Naive thymus-derived CD4-positive, alpha-beta T cell (primary cell): ENCODE measurements at regions of chr16 and their contacts with region 1.

Region 1: DNA sequence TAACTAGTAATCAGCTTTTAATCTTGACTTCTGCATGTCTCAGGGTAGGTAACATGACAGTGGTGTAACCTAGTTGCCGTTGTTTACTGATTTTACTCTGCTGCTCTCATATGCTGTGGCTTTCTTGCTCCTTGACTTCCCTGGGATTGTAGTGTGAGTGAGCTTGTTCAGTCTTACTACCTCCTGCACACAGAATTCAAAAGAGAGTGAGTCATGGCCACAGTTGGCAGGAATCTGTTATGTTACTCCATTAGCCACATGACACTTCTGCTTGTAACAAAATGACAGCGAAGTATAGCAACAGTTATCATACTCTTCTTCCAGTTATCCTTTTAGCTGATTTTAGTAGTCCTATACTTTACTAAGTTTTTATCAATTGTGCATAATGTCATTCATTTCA is 18.8 kb downstream of the TNRC6A start:
- DNase-seq: no peak
- ATAC-seq: peak; percentile 59
- H3K4me3 ChIP-seq: no peak overlapping the region
- H3K4me3 Mint-ChIP-seq: peak overlapping the region in 6 of 10 donors; percentile 10 to 54 (median 34)
- H3K27ac ChIP-seq: no peak overlapping the region
- H3K27ac Mint-ChIP-seq: peak overlapping the region in 5 of 9 donors; percentile 13 to 82 (median 55)
- H3K4me1 ChIP-seq: peaks cover 12 to 51% of the 10 kb centered on the region in 2 donors
- H3K4me1 Mint-ChIP-seq: peaks cover 64 to 97% (median 88%) of the 10 kb centered on the region in 7 donors
- H3K27me3 ChIP-seq: no peaks in the 10 kb centered on the region
- H3K27me3 Mint-ChIP-seq: no peaks in the 10 kb centered on the region

Region 2: GRCh38 chr16:23578101-23578830 is 1170.0 kb before region 1 on chr16:
- CTCF ChIA-PET with region 1: no interaction called
- POLR2A ChIA-PET with region 1: interaction called, 11 read pairs
- intact Hi-C with region 1: no loop called
- DNase-seq: no peak
- ATAC-seq: no peak
- H3K4me3 ChIP-seq: no peak overlapping the region
- H3K4me3 Mint-ChIP-seq: no peak overlapping the region
- H3K27ac ChIP-seq: no peak overlapping the region
- H3K27ac Mint-ChIP-seq: peak overlapping the region in 2 of 9 donors; percentile 12 to 25
- H3K4me1 ChIP-seq: no peaks in the 10 kb centered on the region
- H3K4me1 Mint-ChIP-seq: peaks cover 0 to 3% (median 0%) of the 10 kb centered on the region in 7 donors
- H3K27me3 ChIP-seq: no peaks in the 10 kb centered on the region
- H3K27me3 Mint-ChIP-seq: no peaks in the 10 kb centered on the region

Region 3: GRCh38 chr16:24689145-24689544 is 59.1 kb before region 1 on chr16:
- CTCF ChIA-PET with region 1: no interaction called
- POLR2A ChIA-PET with region 1: no interaction called
- intact Hi-C with region 1: no loop called
- DNase-seq: no peak
- ATAC-seq: no peak
- H3K4me3 ChIP-seq: no peak overlapping the region
- H3K4me3 Mint-ChIP-seq: no peak overlapping the region
- H3K27ac ChIP-seq: no peak overlapping the region
- H3K27ac Mint-ChIP-seq: no peak overlapping the region
- H3K4me1 ChIP-seq: no peaks in the 10 kb centered on the region
- H3K4me1 Mint-ChIP-seq: peaks cover 0 to 8% (median 0%) of the 10 kb centered on the region in 7 donors
- H3K27me3 ChIP-seq: no peaks in the 10 kb centered on the region
- H3K27me3 Mint-ChIP-seq: peaks cover 0 to 16% (median 12%) of the 10 kb centered on the region in 5 donors

Region 4: GRCh38 chr16:24766057-24766456 is 17.8 kb after region 1 on chr16:
- CTCF ChIA-PET with region 1: no interaction called
- POLR2A ChIA-PET with region 1: no interaction called
- intact Hi-C with region 1: no loop called
- DNase-seq: no peak
- ATAC-seq: no peak
- H3K4me3 ChIP-seq: no peak overlapping the region
- H3K4me3 Mint-ChIP-seq: no peak overlapping the region
- H3K27ac ChIP-seq: no peak overlapping the region
- H3K27ac Mint-ChIP-seq: no peak overlapping the region
- H3K4me1 ChIP-seq: no peaks in the 10 kb centered on the region
- H3K4me1 Mint-ChIP-seq: peaks cover 12 to 32% (median 23%) of the 10 kb centered on the region in 7 donors
- H3K27me3 ChIP-seq: no peaks in the 10 kb centered on the region
- H3K27me3 Mint-ChIP-seq: no peaks in the 10 kb centered on the region